Panc1 (cell line): ENCODE measurements at regions of chr2 and their contacts with region 1.

Region 1: DNA sequence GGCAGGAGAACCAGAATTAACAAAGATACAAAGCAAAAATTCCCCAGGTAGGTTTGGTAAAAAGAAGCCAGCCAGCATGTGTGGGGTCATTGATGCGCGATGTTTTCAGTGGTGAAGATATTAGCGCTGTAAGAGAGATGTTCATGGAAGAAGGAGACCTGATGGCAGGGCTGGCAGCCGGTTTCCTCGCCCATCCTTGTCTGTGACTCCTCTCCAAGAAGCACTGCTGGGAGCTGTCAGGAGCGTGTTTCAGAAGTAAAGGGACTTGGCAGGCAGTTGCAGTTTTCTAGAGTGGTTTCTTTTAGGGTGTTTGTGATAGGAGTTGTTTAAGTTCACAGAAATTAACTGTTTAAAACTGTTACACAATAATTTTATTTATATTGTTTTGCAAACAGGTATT is 24.6 kb downstream of the TAF1B start:
- DNase-seq: no peak
- ATAC-seq: no peak
- H3K4me3 ChIP-seq: no peak overlapping the region
- H3K27ac ChIP-seq: no peak overlapping the region
- H3K4me1 ChIP-seq: no peaks in the 10 kb centered on the region
- H3K27me3 ChIP-seq: no peaks in the 10 kb centered on the region
- CTCF ChIP-seq: no peak

Region 2: DNA sequence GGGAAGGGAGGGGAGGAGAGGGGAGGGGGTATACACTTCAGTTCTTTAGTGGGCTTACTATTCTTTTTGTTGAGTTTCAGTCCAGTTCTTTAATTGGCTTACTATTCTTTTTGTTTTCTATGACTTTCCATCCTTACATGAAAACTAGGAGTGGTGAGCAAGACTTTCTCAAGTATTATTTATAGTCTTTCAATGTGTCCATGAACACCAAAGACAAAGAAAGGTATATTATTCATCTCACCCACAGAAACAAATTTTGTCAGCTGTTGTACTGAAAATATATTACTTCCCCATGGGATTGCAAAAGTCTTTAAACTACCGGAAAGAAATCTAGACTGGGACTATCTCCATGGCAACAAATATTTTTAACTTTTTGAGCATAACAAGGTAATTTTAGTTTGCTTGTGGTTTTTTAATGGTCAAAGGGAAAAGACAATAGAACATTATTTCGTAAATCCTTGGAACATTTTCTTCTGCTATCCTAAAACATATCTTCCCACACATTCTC is 329.8 kb before region 1 on chr2:
- CTCF ChIA-PET with region 1: interaction called, 10 read pairs
- POLR2A ChIA-PET with region 1: no interaction called
- in situ Hi-C with region 1: no loop called
- intact Hi-C with region 1: no loop called
- DNase-seq: no peak
- ATAC-seq: no peak
- H3K4me3 ChIP-seq: no peak overlapping the region
- H3K27ac ChIP-seq: no peak overlapping the region
- H3K4me1 ChIP-seq: no peaks in the 10 kb centered on the region
- H3K27me3 ChIP-seq: no peaks in the 10 kb centered on the region
- CTCF ChIP-seq: no peak